ENCODE measurements at regions of chr6 and their contacts with region 1.

Region 1: GRCh38 chr6:79646006-79646405 is 14.9 kb downstream of the SH3BGRL2 start:
- DNase-seq: peak in 5 of 9 donors; percentile 31 to 50 (median 42)
- ATAC-seq: peak; percentile 70
- H3K4me3 ChIP-seq: no peak overlapping the region
- H3K4me3 Mint-ChIP-seq: peak overlapping the region in 1 of 10 donors; percentile 36
- H3K27ac ChIP-seq: no peak overlapping the region
- H3K27ac Mint-ChIP-seq: peak overlapping the region in 1 of 9 donors; percentile 41
- H3K4me1 ChIP-seq: no peaks in the 10 kb centered on the region
- H3K4me1 Mint-ChIP-seq: peaks cover 0 to 35% (median 15%) of the 10 kb centered on the region in 7 donors
- H3K27me3 ChIP-seq: no peaks in the 10 kb centered on the region
- H3K27me3 Mint-ChIP-seq: peaks cover 5 to 16% (median 10%) of the 10 kb centered on the region in 5 donors

Region 2: DNA sequence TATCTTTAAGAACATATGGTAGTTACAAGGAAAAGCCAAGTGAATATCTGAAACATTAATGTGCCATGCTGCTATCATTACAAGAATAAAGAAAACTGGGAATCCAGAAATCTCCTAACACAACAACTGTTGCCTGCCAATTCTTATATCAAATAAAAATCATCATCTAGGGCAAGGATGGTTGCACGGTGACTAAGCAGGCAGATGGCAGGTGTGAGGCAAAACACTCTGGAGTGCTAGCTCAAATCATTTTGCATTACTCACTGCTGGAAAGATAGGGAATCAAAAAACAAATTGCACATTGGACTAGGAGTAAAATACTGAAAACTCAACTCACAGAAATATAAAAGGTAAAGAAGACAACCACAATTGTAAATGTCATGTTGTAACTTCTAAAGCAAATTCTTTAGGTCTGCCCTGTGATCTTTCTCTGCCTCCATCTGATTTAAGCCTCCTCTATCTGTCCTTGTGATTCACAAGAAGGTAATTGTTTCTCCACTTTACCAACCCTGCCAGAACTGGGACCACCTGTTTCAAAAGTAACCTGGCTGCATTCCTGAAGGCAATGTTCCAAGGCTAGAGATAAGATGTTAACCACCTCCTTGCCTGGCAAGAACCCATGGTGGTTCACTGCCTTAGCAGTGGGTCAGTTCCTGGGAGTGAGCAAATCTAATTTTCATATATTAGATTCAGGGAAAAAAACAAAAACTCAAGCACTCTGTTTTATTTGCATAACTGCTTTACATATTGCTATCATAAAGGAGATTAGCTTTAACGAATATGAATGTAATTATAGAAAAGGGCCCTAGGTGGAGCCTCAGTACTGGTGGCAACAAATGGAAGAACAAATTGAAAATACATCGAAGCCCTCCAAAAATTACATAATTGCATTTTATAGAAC is 75.6 kb before region 1 on chr6:
- CTCF ChIA-PET with region 1: interaction called, 6 read pairs
- POLR2A ChIA-PET with region 1: no interaction called
- intact Hi-C with region 1: loop called in 1 of 2 experiments (anchors 1 kb)
- DNase-seq: peak in 6 of 9 donors; percentile 17 to 52 (median 44)
- ATAC-seq: peak; percentile 60
- H3K4me3 ChIP-seq: no peak overlapping the region
- H3K4me3 Mint-ChIP-seq: peak overlapping the region in 5 of 10 donors; percentile 2 to 61 (median 51)
- H3K27ac ChIP-seq: no peak overlapping the region
- H3K27ac Mint-ChIP-seq: no peak overlapping the region
- H3K4me1 ChIP-seq: no peaks in the 10 kb centered on the region
- H3K4me1 Mint-ChIP-seq: peaks cover 0 to 5% (median 0%) of the 10 kb centered on the region in 7 donors
- H3K27me3 ChIP-seq: no peaks in the 10 kb centered on the region
- H3K27me3 Mint-ChIP-seq: peaks cover 0 to 5% (median 0%) of the 10 kb centered on the region in 5 donors

Region 3: GRCh38 chr6:79617518-79617941 is 28.5 kb before region 1 on chr6:
- CTCF ChIA-PET with region 1: no interaction called
- POLR2A ChIA-PET with region 1: no interaction called
- intact Hi-C with region 1: no loop called
- DNase-seq: no peak
- ATAC-seq: no peak
- H3K4me3 ChIP-seq: no peak overlapping the region
- H3K4me3 Mint-ChIP-seq: no peak overlapping the region
- H3K27ac ChIP-seq: no peak overlapping the region
- H3K27ac Mint-ChIP-seq: no peak overlapping the region
- H3K4me1 ChIP-seq: no peaks in the 10 kb centered on the region
- H3K4me1 Mint-ChIP-seq: peaks cover 0 to 6% (median 0%) of the 10 kb centered on the region in 7 donors
- H3K27me3 ChIP-seq: no peaks in the 10 kb centered on the region
- H3K27me3 Mint-ChIP-seq: peaks cover 0 to 9% (median 8%) of the 10 kb centered on the region in 5 donors

Region 4: GRCh38 chr6:79702691-79703090 is 56.7 kb after region 1 on chr6:
- CTCF ChIA-PET with region 1: no interaction called
- POLR2A ChIA-PET with region 1: no interaction called
- intact Hi-C with region 1: loop called in 1 of 2 experiments (anchors 2 kb)
- DNase-seq: peak in 5 of 9 donors; percentile 8 to 51 (median 34)
- ATAC-seq: peak; percentile 80
- H3K4me3 ChIP-seq: no peak overlapping the region
- H3K4me3 Mint-ChIP-seq: peak overlapping the region in 8 of 10 donors; percentile 22 to 68 (median 48)
- H3K27ac ChIP-seq: no peak overlapping the region
- H3K27ac Mint-ChIP-seq: peak overlapping the region in 8 of 9 donors; percentile 17 to 76 (median 60)
- H3K4me1 ChIP-seq: peaks cover 0 to 6% of the 10 kb centered on the region in 2 donors
- H3K4me1 Mint-ChIP-seq: peaks cover 0 to 25% (median 16%) of the 10 kb centered on the region in 7 donors
- H3K27me3 ChIP-seq: no peaks in the 10 kb centered on the region
- H3K27me3 Mint-ChIP-seq: peaks cover 0 to 10% (median 0%) of the 10 kb centered on the region in 5 donors

Region 5: GRCh38 chr6:79713701-79714322 is 67.8 kb after region 1 on chr6:
- CTCF ChIA-PET with region 1: interaction called, 10 read pairs
- POLR2A ChIA-PET with region 1: no interaction called
- intact Hi-C with region 1: loop called in 1 of 2 experiments (anchors 1 kb)
- DNase-seq: peak in 8 of 9 donors; percentile 14 to 50 (median 37)
- ATAC-seq: peak; percentile 67
- H3K4me3 ChIP-seq: no peak overlapping the region
- H3K4me3 Mint-ChIP-seq: no peak overlapping the region
- H3K27ac ChIP-seq: no peak overlapping the region
- H3K27ac Mint-ChIP-seq: no peak overlapping the region
- H3K4me1 ChIP-seq: no peaks in the 10 kb centered on the region
- H3K4me1 Mint-ChIP-seq: peaks cover 0 to 6% (median 0%) of the 10 kb centered on the region in 7 donors
- H3K27me3 ChIP-seq: no peaks in the 10 kb centered on the region
- H3K27me3 Mint-ChIP-seq: peaks cover 0 to 19% (median 0%) of the 10 kb centered on the region in 5 donors

Region 6: GRCh38 chr6:79813854-79814709 is 168.1 kb after region 1 on chr6:
- CTCF ChIA-PET with region 1: no interaction called
- POLR2A ChIA-PET with region 1: no interaction called
- intact Hi-C with region 1: loop called in 1 of 2 experiments (anchors 1 kb)
- DNase-seq: peak; percentile 2 to 53 (median 32)
- ATAC-seq: peak; percentile 64
- H3K4me3 ChIP-seq: no peak overlapping the region
- H3K4me3 Mint-ChIP-seq: no peak overlapping the region
- H3K27ac ChIP-seq: no peak overlapping the region
- H3K27ac Mint-ChIP-seq: no peak overlapping the region
- H3K4me1 ChIP-seq: no peaks in the 10 kb centered on the region
- H3K4me1 Mint-ChIP-seq: no peaks in the 10 kb centered on the region
- H3K27me3 ChIP-seq: no peaks in the 10 kb centered on the region
- H3K27me3 Mint-ChIP-seq: peaks cover 2 to 20% (median 5%) of the 10 kb centered on the region in 5 donors